Aorta (tissue), 5 donors: ENCODE measurements at regions of chr6 and their contacts with region 1.

Region 1: DNA sequence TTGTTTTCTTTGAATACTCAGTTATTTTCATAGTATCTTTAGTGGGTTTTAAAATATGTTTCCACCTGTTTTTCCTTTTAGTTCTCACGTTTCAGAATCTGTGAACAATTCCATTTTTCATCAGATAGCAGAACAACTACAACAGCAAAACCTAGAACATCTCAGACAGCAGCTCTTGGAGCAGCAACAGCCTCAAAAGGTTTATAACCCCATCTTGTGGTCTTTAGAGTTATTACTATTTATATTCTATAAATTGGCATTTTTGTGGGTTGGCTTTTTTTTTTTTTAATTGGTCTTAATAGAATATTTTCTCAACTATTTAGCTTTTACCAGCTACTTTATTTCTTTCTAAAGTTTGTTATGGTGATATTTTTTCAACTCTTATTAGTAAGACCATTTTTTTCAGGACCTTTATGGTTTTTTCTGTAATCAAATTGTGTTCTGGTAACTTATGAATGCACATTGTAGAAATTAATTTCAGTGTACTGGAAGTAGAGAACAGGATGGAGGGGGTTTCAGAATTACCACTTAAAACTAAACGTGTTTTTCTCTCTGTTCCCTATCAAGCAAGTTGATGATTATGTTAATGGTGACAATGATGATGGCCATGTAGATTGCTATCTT is 72.2 kb downstream of the SCAF8 start:
- DNase-seq: no peak
- ATAC-seq: no peak
- H3K4me3 ChIP-seq: no peak overlapping the region
- H3K27ac ChIP-seq: no peak overlapping the region
- H3K4me1 ChIP-seq: no peaks in the 10 kb centered on the region
- H3K27me3 ChIP-seq: no peaks in the 10 kb centered on the region

Region 2: GRCh38 chr6:154156135-154156896 is 649.1 kb before region 1 on chr6:
- intact Hi-C with region 1: loop called (anchors 10 kb)
- DNase-seq: peak in 1 of 2 donors; percentile 61
- ATAC-seq: no peak
- H3K4me3 ChIP-seq: no peak overlapping the region
- H3K27ac ChIP-seq: no peak overlapping the region
- H3K4me1 ChIP-seq: no peaks in the 10 kb centered on the region
- H3K27me3 ChIP-seq: no peaks in the 10 kb centered on the region

Region 3: DNA sequence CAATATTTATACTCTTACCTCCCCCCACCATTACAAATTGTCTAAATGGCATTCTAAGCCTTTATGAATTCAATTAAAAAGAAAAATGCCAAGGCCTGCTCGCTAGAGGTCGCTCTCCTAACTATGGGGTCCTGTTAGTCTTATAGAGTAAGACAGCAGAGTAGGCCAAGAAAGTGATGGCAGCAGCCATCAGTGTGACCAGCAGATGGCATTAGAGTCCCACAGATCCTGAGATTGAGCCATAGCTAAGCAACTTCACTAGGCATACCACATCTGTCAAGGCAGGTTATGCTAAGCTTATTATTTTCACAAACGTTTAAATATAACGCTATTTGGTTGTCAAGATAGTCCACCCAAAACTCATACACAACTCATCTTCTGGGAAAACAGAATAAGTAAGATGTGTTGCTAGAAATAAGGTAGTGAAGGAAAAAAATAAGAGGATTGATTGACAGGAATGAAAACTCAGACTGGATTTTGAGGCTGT is 129.8 kb before region 1 on chr6:
- intact Hi-C with region 1: loop called (anchors 2 kb)
- DNase-seq: peak; percentile 91 to 92
- ATAC-seq: peak; percentile 97
- H3K4me3 ChIP-seq: no peak overlapping the region
- H3K27ac ChIP-seq: no peak overlapping the region
- H3K4me1 ChIP-seq: no peaks in the 10 kb centered on the region
- H3K27me3 ChIP-seq: no peaks in the 10 kb centered on the region

Region 4: GRCh38 chr6:154733012-154733625 is 72.3 kb before region 1 on chr6 and contains the start of gene SCAF8:
- intact Hi-C with region 1: loop called (anchors 2 to 5 kb)
- DNase-seq: peak; percentile 86 to 95
- ATAC-seq: peak; percentile 97
- H3K4me3 ChIP-seq: peak within 1 kb of the TSS; percentile 87 to 94
- H3K27ac ChIP-seq: peak within 1 kb of the TSS; percentile 75 to 84
- H3K4me1 ChIP-seq: no peaks in the 10 kb centered on the region
- H3K27me3 ChIP-seq: no peaks in the 10 kb centered on the region
- total RNA-seq, gene SCAF8: 47.0 to 52.3 TPM